Heart right ventricle (tissue), 16 donors: ENCODE measurements at regions of chr17 and their contacts with region 1.

Region 1: GRCh38 chr17:79393358-79394202 is 217.3 kb downstream of the RBFOX3 start:
- DNase-seq: peak; percentile 74 to 83
- ATAC-seq: peak; percentile 72 to 87 (median 80)
- H3K4me3 ChIP-seq: no peak overlapping the region
- H3K27ac ChIP-seq: no peak overlapping the region
- H3K4me1 ChIP-seq: peaks cover 0 to 3% (median 0%) of the 10 kb centered on the region in 9 donors
- H3K27me3 ChIP-seq: peaks cover 0 to 99% (median 90%) of the 10 kb centered on the region in 7 donors
- CTCF ChIP-seq: peak; percentile 74 to 94 (median 91)

Region 2: GRCh38 chr17:78993241-78993956 is 400.2 kb before region 1 on chr17:
- intact Hi-C with region 1: loop called in 2 of 10 experiments (anchors 10 kb)
- DNase-seq: peak; percentile 36 to 53
- ATAC-seq: peak in 6 of 8 donors; percentile 43 to 59 (median 50)
- H3K4me3 ChIP-seq: no peak overlapping the region
- H3K27ac ChIP-seq: peak overlapping the region in 2 of 10 donors; percentile 3 to 35
- H3K4me1 ChIP-seq: peaks cover 4 to 35% (median 15%) of the 10 kb centered on the region in 9 donors
- H3K27me3 ChIP-seq: no peaks in the 10 kb centered on the region
- CTCF ChIP-seq: peak; percentile 62 to 88 (median 78)

Region 3: DNA sequence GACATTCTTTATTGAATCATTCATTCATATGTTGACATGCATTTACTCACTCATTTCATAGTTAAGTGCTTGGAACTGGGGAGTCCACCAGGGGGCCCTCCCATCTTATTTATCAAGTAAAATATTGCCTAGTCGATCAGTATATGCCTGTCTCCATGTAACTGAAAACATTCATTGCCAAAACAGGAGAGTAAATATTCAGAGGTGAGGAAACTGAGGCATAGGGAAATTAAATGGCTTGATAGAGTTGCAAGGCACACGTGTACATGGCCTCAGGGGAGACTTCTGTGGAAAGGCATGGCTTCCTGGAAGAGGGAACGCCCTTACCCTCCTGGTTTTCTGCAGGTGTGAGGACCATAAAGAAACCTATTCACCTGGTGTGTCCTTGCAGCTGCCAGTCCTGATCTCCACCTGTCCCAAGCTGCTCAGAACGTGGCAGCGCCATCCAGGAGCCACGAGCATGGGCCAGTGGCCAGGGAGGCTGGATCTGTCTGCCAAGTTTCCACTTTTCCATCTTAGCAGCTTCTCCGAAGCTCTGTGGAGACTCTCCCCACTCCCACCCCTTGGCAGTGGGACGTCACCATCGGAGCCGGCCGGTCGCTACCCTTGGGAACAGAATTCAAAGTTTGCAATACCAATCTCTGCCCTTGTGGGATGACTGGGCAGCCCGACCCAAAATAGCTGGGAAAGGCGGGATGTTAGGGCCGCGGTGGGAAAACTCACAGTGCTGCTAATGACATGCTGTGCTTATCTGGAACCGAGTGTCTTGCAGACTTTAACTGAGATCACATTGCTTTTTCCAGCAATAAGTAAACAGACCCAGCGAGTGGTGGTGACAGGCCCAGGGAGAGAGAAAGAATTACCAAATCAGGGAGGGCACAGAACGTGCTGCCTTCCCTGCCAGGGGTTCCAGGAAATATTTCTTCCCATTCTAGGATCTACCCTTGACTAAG is 373.7 kb before region 1 on chr17:
- intact Hi-C with region 1: loop called in 5 of 10 experiments (anchors 1 to 10 kb)
- DNase-seq: peak; percentile 65 to 79
- ATAC-seq: peak; percentile 9 to 60 (median 38)
- H3K4me3 ChIP-seq: peak overlapping the region in 3 of 10 donors; percentile 2 to 20 (median 4)
- H3K27ac ChIP-seq: peak overlapping the region; percentile 52 to 95 (median 90)
- H3K4me1 ChIP-seq: peaks cover 24 to 57% (median 52%) of the 10 kb centered on the region in 9 donors
- H3K27me3 ChIP-seq: peaks cover 0 to 42% (median 0%) of the 10 kb centered on the region in 7 donors
- CTCF ChIP-seq: peak; percentile 53 to 85 (median 81)

Region 4: DNA sequence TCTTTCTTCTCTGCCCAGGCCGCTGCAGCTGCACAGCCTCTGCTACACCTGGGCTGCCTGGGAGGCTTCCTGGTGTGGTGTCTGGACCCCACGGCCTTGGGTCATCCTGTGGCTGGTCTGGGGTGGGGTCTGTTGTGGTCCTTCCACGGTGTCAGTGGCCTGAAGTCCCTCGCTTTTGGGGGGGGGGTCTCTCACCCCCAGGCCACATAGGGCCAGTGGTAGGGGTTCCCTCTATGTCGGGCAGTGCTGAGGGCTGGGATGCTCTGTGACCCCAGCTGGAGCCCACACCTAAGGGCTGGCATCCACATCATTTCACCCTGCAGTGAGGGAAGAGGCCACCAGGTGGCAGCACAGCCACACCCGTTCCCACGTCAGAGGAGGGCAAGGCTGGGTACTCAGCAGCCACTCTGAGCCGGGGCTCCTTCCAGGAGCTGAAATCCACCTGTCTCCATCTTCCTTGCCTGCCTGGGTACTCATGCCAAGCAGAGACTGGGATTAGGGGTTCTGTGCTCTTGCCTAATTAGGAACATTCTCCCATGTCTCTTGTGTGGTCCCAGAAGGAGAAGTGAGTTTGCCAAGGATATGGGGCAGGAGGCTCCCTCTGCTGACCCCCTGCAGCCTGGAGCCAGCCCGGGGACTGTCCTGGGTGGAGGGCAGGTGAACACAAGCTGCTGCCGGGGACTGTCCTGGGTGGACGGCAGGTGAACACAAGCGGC is 306.0 kb before region 1 on chr17:
- intact Hi-C with region 1: loop called (anchors 1 to 5 kb)
- DNase-seq: peak; percentile 57 to 77
- ATAC-seq: peak; percentile 41 to 74 (median 70)
- H3K4me3 ChIP-seq: no peak overlapping the region
- H3K27ac ChIP-seq: no peak overlapping the region
- H3K4me1 ChIP-seq: peaks cover 0 to 26% (median 10%) of the 10 kb centered on the region in 9 donors
- H3K27me3 ChIP-seq: peaks cover 0 to 21% (median 8%) of the 10 kb centered on the region in 7 donors
- CTCF ChIP-seq: peak; percentile 89 to 96 (median 92)

Region 5: GRCh38 chr17:79437856-79438457 is 44.4 kb after region 1 on chr17:
- intact Hi-C with region 1: no loop called
- DNase-seq: no peak
- ATAC-seq: no peak
- H3K4me3 ChIP-seq: no peak overlapping the region
- H3K27ac ChIP-seq: no peak overlapping the region
- H3K4me1 ChIP-seq: no peaks in the 10 kb centered on the region
- H3K27me3 ChIP-seq: peaks cover 0 to 69% (median 41%) of the 10 kb centered on the region in 7 donors
- CTCF ChIP-seq: no peak

Region 6: GRCh38 chr17:79515646-79516571 is 122.3 kb after region 1 on chr17:
- intact Hi-C with region 1: no loop called
- DNase-seq: no peak
- ATAC-seq: no peak
- H3K4me3 ChIP-seq: no peak overlapping the region
- H3K27ac ChIP-seq: no peak overlapping the region
- H3K4me1 ChIP-seq: no peaks in the 10 kb centered on the region
- H3K27me3 ChIP-seq: peaks cover 0 to 60% (median 47%) of the 10 kb centered on the region in 7 donors
- CTCF ChIP-seq: no peak

Region 7: DNA sequence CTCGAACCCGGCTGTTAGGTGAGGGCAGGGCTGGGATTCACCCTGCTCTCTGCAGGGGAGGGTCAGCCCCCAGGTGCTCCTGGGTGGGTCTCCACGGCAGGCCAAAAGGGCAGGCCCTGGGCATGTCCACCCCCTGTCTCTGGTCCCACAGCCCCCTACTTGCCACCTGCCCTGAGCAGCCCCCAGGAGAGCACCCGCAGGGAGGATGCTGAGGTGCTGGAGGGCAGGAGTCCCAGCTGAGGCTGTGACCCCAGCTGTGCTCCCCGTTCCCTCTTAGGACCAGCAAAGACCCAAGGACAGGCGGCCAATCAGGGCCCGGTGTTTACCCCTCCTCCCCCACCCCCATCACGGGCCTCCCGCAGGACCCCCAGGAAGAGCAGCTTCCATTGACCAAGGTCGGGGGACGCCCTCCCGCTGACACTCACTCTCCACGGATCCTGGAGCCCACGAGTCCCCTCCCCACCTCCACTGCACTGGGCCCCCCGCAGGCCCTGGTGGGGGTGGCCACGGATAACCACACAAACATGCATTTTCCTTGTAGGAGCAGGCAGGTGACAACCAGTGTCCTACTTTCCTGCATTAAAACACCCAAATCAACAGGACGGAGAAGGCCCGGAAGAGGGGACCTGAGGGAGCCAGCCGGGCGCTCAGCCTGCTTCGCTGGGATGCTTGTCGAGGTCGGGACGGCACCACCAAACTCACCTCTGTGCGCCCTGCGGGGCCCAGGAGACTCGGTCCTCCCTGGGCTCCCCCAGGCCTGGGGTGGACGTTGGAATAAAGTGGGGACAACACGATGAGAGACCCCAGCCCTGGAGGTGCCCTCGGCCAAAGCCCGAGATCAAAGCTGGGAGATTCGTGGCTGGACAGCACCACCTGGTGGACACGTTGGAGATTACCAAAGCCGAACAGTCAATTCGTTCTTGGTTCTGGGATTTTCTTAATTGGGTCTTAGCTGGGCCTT is 314.6 kb after region 1 on chr17:
- intact Hi-C with region 1: loop called in 4 of 10 experiments (anchors 2 to 10 kb)
- DNase-seq: peak; percentile 30 to 44
- ATAC-seq: peak; percentile 38 to 72 (median 50)
- H3K4me3 ChIP-seq: peak overlapping the region in 2 of 10 donors; percentile 12 to 27
- H3K27ac ChIP-seq: no peak overlapping the region
- H3K4me1 ChIP-seq: peaks cover 0 to 5% (median 0%) of the 10 kb centered on the region in 9 donors
- H3K27me3 ChIP-seq: peaks cover 0 to 52% (median 26%) of the 10 kb centered on the region in 7 donors
- CTCF ChIP-seq: peak; percentile 69 to 84 (median 81)